ENCODE measurements at regions of chr16 and their contacts with region 1.

Region 1: GRCh38 chr16:1782352-1783091 is at the starts of genes NUBP2 and SPSB3:
- DNase-seq: peak; percentile 91
- ATAC-seq: peak; percentile 88
- H3K4me3 Mint-ChIP-seq: peak within 1 kb of the TSS; percentile 89
- H3K27ac Mint-ChIP-seq: peak within 1 kb of the TSS; percentile 87
- H3K4me1 Mint-ChIP-seq: peaks cover 24% of the 10 kb centered on the region
- H3K27me3 Mint-ChIP-seq: no peaks in the 10 kb centered on the region
- CTCF ChIP-seq: no peak
- total RNA-seq, gene NUBP2: 53.7 and 54.2 TPM in 2 replicates
- total RNA-seq, gene SPSB3: 36.4 and 40.3 TPM in 2 replicates

Region 2: GRCh38 chr16:1308977-1309885 is 473.3 kb before region 1 on chr16 and contains the start of gene UBE2I:
- CTCF ChIA-PET with region 1: no interaction called
- POLR2A ChIA-PET with region 1: interaction called, 4 read pairs
- intact Hi-C with region 1: loop called (anchors 2 kb)
- DNase-seq: peak; percentile 98
- ATAC-seq: peak; percentile 69
- H3K4me3 Mint-ChIP-seq: peak within 1 kb of the TSS; percentile 98
- H3K27ac Mint-ChIP-seq: peak within 1 kb of the TSS; percentile 100
- H3K4me1 Mint-ChIP-seq: peaks cover 67% of the 10 kb centered on the region
- H3K27me3 Mint-ChIP-seq: no peaks in the 10 kb centered on the region
- CTCF ChIP-seq: no peak
- total RNA-seq, gene UBE2I: 220 and 240 TPM in 2 replicates

Region 3: DNA sequence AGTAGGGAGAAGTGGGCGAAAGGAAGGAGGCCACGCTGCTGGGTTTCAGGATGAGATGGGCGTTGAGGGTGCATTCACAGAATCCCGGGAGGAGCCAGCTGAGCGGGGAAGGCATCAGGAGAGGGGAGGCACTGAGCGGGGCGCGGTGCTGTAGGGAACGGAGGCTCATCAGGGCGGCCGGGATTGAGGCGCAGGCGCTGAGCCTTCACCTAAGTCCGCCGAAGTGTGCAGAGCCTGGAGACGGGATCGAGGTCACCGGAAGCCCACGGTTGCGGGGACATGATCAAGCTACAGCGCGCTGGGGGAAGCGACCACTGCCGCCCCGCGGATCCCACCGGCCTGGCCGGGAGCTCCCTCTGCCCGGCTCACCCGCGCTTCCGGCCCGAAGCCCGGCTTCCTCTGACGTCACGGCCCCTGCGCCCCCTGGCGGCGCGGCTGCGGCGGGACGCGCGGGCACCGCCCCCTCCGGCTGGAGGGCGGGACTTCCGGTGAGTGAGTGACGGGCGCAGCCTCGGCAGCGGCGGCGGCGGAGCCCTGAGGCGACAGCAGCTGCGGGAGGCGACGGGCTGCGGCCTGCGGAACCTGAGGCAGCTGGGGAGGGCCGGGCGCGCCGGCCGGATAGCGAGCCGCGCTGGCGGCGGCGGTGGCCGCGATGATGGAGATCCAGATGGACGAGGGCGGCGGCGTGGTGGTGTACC is 76.7 kb before region 1 on chr16 and contains the start of gene MAPK8IP3:
- CTCF ChIA-PET with region 1: interaction called, 7 read pairs
- POLR2A ChIA-PET with region 1: interaction called, 22 read pairs
- intact Hi-C with region 1: loop called (anchors 2 kb)
- DNase-seq: peak; percentile 100
- ATAC-seq: peak; percentile 81
- H3K4me3 Mint-ChIP-seq: peak within 1 kb of the TSS; percentile 99
- H3K27ac Mint-ChIP-seq: peak within 1 kb of the TSS; percentile 98
- H3K4me1 Mint-ChIP-seq: peaks cover 38% of the 10 kb centered on the region
- H3K27me3 Mint-ChIP-seq: no peaks in the 10 kb centered on the region
- CTCF ChIP-seq: no peak
- total RNA-seq, gene MAPK8IP3: 157 and 201 TPM in 2 replicates

Region 4: GRCh38 chr16:1826691-1827575 is 44.4 kb after region 1 on chr16 and contains the starts of genes FAHD1 and HAGH:
- CTCF ChIA-PET with region 1: interaction called, 3 read pairs
- POLR2A ChIA-PET with region 1: interaction called, 20 read pairs
- intact Hi-C with region 1: loop called (anchors 1 kb)
- DNase-seq: peak; percentile 95
- ATAC-seq: peak; percentile 88
- H3K4me3 Mint-ChIP-seq: peak within 1 kb of the TSS; percentile 94
- H3K27ac Mint-ChIP-seq: peak within 1 kb of the TSS; percentile 91
- H3K4me1 Mint-ChIP-seq: peaks cover 39% of the 10 kb centered on the region
- H3K27me3 Mint-ChIP-seq: no peaks in the 10 kb centered on the region
- CTCF ChIP-seq: no peak
- total RNA-seq, gene FAHD1: 10.2 and 10.4 TPM in 2 replicates
- total RNA-seq, gene HAGH: 19.0 and 19.5 TPM in 2 replicates

Region 5: GRCh38 chr16:1971796-1972489 is 189.4 kb after region 1 on chr16 and contains the start of gene TBL3:
- CTCF ChIA-PET with region 1: no interaction called
- POLR2A ChIA-PET with region 1: interaction called, 6 read pairs
- intact Hi-C with region 1: loop called (anchors 5 kb)
- DNase-seq: peak; percentile 99
- ATAC-seq: peak; percentile 97
- H3K4me3 Mint-ChIP-seq: peak within 1 kb of the TSS; percentile 93
- H3K27ac Mint-ChIP-seq: peak within 1 kb of the TSS; percentile 97
- H3K4me1 Mint-ChIP-seq: peaks cover 23% of the 10 kb centered on the region
- H3K27me3 Mint-ChIP-seq: no peaks in the 10 kb centered on the region
- CTCF ChIP-seq: no peak
- total RNA-seq, gene TBL3: 41.8 and 44.2 TPM in 2 replicates